ENCODE measurements at regions of chr2 and their contacts with region 1.

Region 1: DNA sequence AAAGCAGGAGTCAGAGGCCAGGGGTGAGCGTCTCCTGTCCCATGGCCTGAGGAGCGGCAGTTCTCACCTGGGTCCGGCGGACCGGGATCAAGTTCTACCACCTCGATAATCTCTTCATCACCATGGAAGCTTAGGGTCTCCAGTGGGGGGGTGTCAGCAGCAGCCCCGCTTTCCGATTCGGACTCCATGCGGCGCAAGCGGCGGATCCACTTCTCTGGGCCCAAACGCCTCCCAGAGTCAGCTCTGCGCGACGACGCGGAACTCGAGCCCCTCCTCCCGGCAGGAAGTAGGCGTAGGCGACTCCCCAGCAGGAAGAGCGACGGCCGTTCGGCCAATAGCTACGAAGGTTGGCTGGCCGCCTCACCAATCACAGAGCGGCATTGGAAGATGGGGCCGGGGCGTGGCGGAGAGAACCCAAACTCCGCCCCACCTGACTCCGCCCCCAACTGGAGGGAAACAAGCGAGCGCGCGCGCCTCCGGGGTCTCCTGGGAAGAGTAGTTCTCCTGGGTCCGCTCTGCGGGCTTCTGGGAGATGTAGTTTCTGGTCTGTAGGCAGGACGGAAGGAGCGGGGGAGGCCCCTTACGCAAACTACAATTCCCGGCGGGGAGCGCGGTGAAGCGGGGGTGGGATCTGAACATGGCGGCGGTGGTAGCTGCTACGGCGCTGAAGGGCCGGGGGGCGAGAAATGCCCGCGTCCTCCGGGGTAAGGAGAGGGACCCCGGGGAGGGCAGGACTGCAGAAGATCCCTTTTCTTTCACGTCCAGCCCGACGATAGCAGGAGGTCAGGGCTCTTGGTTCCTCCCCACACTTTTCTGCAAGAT is at the starts of genes AAMP and PNKD:
- DNase-seq: peak; percentile 100
- H3K4me3 ChIP-seq: peak within 1 kb of the TSS; percentile 94
- H3K4me3 Mint-ChIP-seq: peak within 1 kb of the TSS; percentile 85 to 95 (median 89)
- H3K27ac ChIP-seq: peak within 1 kb of the TSS; percentile 83
- H3K27ac Mint-ChIP-seq: peak within 1 kb of the TSS; percentile 74 to 99 (median 92)
- H3K4me1 ChIP-seq: peaks cover 31% of the 10 kb centered on the region
- H3K4me1 Mint-ChIP-seq: peaks cover 42 to 66% (median 50%) of the 10 kb centered on the region in 3 donors
- H3K27me3 ChIP-seq: no peaks in the 10 kb centered on the region
- H3K27me3 Mint-ChIP-seq: no peaks in the 10 kb centered on the region
- total RNA-seq, gene AAMP: 94.8 to 95.2 TPM
- total RNA-seq, gene PNKD: 26.8 to 31.6 TPM

Region 2: DNA sequence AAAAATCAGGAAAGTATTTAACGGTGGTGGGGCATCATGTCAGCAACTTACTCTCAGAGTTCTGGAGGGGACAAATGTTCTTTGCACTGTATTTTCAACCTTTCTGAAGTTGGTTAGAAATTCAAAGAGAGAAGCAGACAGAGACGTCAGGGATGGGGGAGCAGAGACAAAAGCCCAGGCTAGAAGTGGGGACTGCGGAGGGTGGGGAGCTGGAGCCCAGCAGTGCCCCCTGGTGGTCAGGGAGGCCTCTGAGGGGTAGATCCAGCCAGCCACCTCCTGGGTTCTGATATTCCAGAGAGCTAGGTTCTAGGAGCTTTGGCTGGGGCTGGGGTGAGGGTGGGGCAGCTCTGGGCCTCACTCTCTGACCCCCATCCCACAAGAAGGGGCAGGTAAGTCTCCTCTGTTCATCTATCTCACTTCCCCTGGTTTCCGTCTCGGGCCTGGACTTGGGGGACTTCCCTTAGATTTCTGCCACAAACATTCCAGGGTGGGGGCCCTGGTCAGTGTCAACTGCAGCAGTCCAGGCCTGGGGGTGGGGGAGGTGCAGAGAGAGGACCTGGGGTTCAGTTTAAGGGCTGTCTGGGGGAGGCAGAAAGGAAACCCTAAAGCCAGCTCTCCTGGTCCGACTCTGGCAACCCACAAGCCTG is 276.2 kb before region 1 on chr2:
- CTCF ChIA-PET with region 1: no interaction called
- POLR2A ChIA-PET with region 1: no interaction called
- DNase-seq: peak in 4 of 5 donors; percentile 14 to 37 (median 20)
- H3K4me3 ChIP-seq: no peak overlapping the region
- H3K4me3 Mint-ChIP-seq: no peak overlapping the region
- H3K27ac ChIP-seq: no peak overlapping the region
- H3K27ac Mint-ChIP-seq: no peak overlapping the region
- H3K4me1 ChIP-seq: no peaks in the 10 kb centered on the region
- H3K4me1 Mint-ChIP-seq: no peaks in the 10 kb centered on the region
- H3K27me3 ChIP-seq: no peaks in the 10 kb centered on the region
- H3K27me3 Mint-ChIP-seq: peaks cover 8 to 46% of the 10 kb centered on the region in 2 donors

Region 3: GRCh38 chr2:218229239-218229638 is 40.9 kb before region 1 on chr2:
- CTCF ChIA-PET with region 1: interaction called, 11 read pairs
- POLR2A ChIA-PET with region 1: interaction called, 3 read pairs
- DNase-seq: peak in 4 of 5 donors; percentile 24 to 59 (median 49)
- H3K4me3 ChIP-seq: no peak overlapping the region
- H3K4me3 Mint-ChIP-seq: peak overlapping the region; percentile 51 to 82 (median 75)
- H3K27ac ChIP-seq: no peak overlapping the region
- H3K27ac Mint-ChIP-seq: peak overlapping the region; percentile 73 to 94 (median 92)
- H3K4me1 ChIP-seq: peaks cover 58% of the 10 kb centered on the region
- H3K4me1 Mint-ChIP-seq: peaks cover 74 to 87% (median 85%) of the 10 kb centered on the region in 3 donors
- H3K27me3 ChIP-seq: no peaks in the 10 kb centered on the region
- H3K27me3 Mint-ChIP-seq: no peaks in the 10 kb centered on the region

Region 4: GRCh38 chr2:218292048-218293014 is 22.2 kb after region 1 on chr2 and contains the start of gene TMBIM1:
- CTCF ChIA-PET with region 1: interaction called, 144 read pairs
- POLR2A ChIA-PET with region 1: interaction called, 41 read pairs
- DNase-seq: peak; percentile 76 to 84 (median 79)
- H3K4me3 ChIP-seq: peak within 1 kb of the TSS; percentile 83
- H3K4me3 Mint-ChIP-seq: peak within 1 kb of the TSS; percentile 88 to 94 (median 92)
- H3K27ac ChIP-seq: peak within 1 kb of the TSS; percentile 84
- H3K27ac Mint-ChIP-seq: peak within 1 kb of the TSS; percentile 88 to 99 (median 98)
- H3K4me1 ChIP-seq: peaks cover 58% of the 10 kb centered on the region
- H3K4me1 Mint-ChIP-seq: peaks cover 46 to 66% (median 58%) of the 10 kb centered on the region in 3 donors
- H3K27me3 ChIP-seq: no peaks in the 10 kb centered on the region
- H3K27me3 Mint-ChIP-seq: no peaks in the 10 kb centered on the region
- total RNA-seq, gene TMBIM1: 82.3 to 92.3 TPM

Region 5: GRCh38 chr2:218323809-218324521 is 53.9 kb after region 1 on chr2:
- CTCF ChIA-PET with region 1: no interaction called
- POLR2A ChIA-PET with region 1: no interaction called
- DNase-seq: no peak
- H3K4me3 ChIP-seq: peak overlapping the region; percentile 41
- H3K4me3 Mint-ChIP-seq: peak overlapping the region; percentile 73 to 91 (median 85)
- H3K27ac ChIP-seq: no peak overlapping the region
- H3K27ac Mint-ChIP-seq: peak overlapping the region in 5 of 8 donors; percentile 53 to 84 (median 77)
- H3K4me1 ChIP-seq: peaks cover 26% of the 10 kb centered on the region
- H3K4me1 Mint-ChIP-seq: peaks cover 15 to 26% (median 16%) of the 10 kb centered on the region in 3 donors
- H3K27me3 ChIP-seq: no peaks in the 10 kb centered on the region
- H3K27me3 Mint-ChIP-seq: peaks cover 8 to 11% of the 10 kb centered on the region in 2 donors

Region 6: DNA sequence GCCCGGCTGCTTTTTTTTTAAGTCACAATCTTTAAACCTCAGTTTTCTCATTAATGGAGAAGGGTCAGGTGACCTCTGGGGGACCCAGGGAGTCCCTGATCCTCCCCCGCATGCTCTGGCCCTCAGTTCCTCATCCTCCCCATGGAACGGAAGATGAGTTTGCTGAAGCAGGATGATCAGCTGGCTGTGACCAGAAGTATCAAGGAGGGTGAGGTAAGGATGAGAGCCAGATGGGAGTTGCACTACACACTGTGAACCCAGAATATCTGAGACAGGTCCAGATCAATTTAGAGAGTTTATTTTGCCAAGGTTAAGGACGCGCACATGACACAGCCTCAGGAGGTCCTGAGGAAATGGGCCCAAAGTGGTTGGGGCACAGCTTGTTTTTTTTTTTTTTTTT is 90.3 kb after region 1 on chr2:
- CTCF ChIA-PET with region 1: interaction called, 80 read pairs
- POLR2A ChIA-PET with region 1: interaction called, 6 read pairs
- DNase-seq: no peak
- H3K4me3 ChIP-seq: no peak overlapping the region
- H3K4me3 Mint-ChIP-seq: no peak overlapping the region
- H3K27ac ChIP-seq: no peak overlapping the region
- H3K27ac Mint-ChIP-seq: no peak overlapping the region
- H3K4me1 ChIP-seq: no peaks in the 10 kb centered on the region
- H3K4me1 Mint-ChIP-seq: peaks cover 0 to 4% (median 2%) of the 10 kb centered on the region in 3 donors
- H3K27me3 ChIP-seq: no peaks in the 10 kb centered on the region
- H3K27me3 Mint-ChIP-seq: no peaks in the 10 kb centered on the region

Region 7: DNA sequence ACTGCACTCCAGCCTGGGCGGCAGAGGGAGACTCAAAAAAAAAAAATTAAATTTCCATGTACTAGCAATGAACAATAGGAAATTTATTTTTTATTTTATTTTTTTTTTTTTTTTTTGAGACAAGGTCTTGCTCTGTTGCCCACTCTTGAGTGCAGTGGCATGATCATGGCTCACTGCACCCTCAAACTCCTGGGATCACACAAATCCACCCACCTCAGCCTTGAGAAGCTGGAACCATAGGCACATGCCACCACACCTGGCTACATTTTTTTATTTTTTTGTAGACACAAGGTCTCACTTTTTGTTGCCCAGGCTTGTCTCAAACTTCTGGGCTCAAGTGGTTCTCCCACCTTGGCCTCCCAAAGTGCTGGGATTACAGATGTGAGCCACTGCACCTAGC is 315.4 kb after region 1 on chr2:
- CTCF ChIA-PET with region 1: no interaction called
- POLR2A ChIA-PET with region 1: no interaction called
- DNase-seq: no peak
- H3K4me3 ChIP-seq: no peak overlapping the region
- H3K4me3 Mint-ChIP-seq: no peak overlapping the region
- H3K27ac ChIP-seq: no peak overlapping the region
- H3K27ac Mint-ChIP-seq: peak overlapping the region in 1 of 8 donors; percentile 78
- H3K4me1 ChIP-seq: no peaks in the 10 kb centered on the region
- H3K4me1 Mint-ChIP-seq: peaks cover 2 to 7% (median 3%) of the 10 kb centered on the region in 3 donors
- H3K27me3 ChIP-seq: no peaks in the 10 kb centered on the region
- H3K27me3 Mint-ChIP-seq: peaks cover 0 to 3% of the 10 kb centered on the region in 2 donors